ENCODE measurements at regions of chr7 and their contacts with region 1.

Region 1: GRCh38 chr7:876167-876967 is at the start of gene GET4:
- DNase-seq: peak; percentile 98
- ATAC-seq: peak; percentile 78
- H3K4me3 ChIP-seq: peak within 1 kb of the TSS in 4 of 5 experiments; percentile 71 to 97 (median 88)
- H3K4me3 Mint-ChIP-seq: peak within 1 kb of the TSS; percentile 83
- H3K27ac ChIP-seq: peak within 1 kb of the TSS; percentile 80 to 93
- H3K27ac Mint-ChIP-seq: peak within 1 kb of the TSS; percentile 90
- H3K4me1 ChIP-seq: peaks cover 21 to 35% of the 10 kb centered on the region in 2 donors
- H3K4me1 Mint-ChIP-seq: peaks cover 36% of the 10 kb centered on the region
- H3K27me3 ChIP-seq: no peaks in the 10 kb centered on the region
- H3K27me3 Mint-ChIP-seq: no peaks in the 10 kb centered on the region
- CTCF ChIP-seq: no peak
- total RNA-seq, gene GET4: 62.8 and 65.5 TPM in 2 replicates

Region 2: DNA sequence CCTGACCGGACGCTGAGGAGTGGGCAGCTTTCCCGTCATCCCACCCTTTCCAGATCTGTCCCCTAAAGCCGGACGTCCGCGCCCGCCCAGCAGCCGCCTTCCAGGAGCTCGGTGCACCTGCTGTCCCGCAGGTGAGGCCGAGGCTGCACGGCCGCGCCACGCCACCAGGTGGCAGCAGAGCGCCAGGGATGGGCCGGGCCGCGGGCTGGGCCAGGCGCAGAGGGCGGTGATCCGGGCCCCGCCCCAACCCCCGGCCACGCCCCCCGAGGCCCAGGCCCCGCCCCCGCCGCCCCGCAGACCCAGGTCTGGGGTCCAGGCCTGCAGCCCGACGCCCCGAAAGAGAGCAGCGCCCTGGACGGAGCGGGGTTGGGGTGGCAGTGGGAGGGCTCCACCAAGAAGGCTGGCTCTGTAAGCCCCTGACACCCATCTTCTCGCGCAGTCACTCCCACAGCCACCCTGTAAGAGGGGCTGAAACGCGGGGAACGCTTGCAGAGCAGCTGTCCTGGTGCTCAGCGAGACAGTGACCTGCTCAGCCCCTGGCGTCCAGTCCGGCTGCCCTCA is 554.2 kb before region 1 on chr7:
- CTCF ChIA-PET with region 1: interaction called, 3 read pairs
- POLR2A ChIA-PET with region 1: no interaction called
- intact Hi-C with region 1: loop called (anchors 2 kb)
- DNase-seq: peak; percentile 82
- ATAC-seq: peak; percentile 100
- H3K4me3 ChIP-seq: no peak overlapping the region
- H3K4me3 Mint-ChIP-seq: no peak overlapping the region
- H3K27ac ChIP-seq: no peak overlapping the region
- H3K27ac Mint-ChIP-seq: no peak overlapping the region
- H3K4me1 ChIP-seq: peaks cover 0 to 9% of the 10 kb centered on the region in 2 donors
- H3K4me1 Mint-ChIP-seq: peaks cover 2% of the 10 kb centered on the region
- H3K27me3 ChIP-seq: peaks cover 0 to 7% (median 3%) of the 10 kb centered on the region in 4 experiments
- H3K27me3 Mint-ChIP-seq: peaks cover 19% of the 10 kb centered on the region
- CTCF ChIP-seq: peak; percentile 94

Region 3: DNA sequence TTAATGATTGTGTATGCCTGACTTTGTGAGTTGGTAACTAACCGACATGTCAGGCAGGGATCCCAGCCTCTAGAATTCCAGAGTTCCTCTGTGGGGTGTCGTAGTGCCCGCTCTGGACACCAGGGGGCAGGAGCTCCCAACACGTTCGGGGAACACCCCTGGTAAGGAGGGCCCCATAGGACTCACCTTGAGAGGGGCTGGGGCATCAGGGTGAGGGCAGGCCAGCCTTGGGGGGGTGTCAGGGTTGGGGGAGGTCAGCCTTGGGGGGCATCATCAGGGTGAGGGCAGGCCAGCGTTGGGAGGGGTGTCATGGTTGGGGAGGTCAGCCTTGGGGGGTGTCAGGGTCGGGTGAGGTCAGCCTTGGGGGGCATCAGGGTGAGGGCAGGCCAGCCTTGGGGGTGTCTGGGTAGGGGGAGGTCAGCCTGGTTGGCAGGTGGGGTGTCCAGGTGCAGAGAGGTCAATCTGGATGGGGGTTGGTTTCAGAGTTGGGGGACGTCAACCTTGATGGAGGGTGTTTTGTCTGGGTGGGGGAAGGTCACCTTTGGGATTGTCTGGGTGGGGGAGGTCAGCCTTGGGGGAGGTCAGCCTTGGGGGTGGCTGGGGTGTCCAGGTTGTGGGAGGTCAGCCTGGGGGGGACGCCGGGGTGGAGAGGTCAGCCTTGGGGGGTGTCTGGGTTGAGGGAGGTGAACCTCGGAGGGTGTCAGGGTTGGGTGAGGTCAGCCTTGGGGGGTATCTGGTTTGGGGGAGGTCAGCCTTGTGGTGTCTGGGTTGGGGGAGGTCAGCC is 89.7 kb before region 1 on chr7:
- CTCF ChIA-PET with region 1: interaction called, 113 read pairs
- POLR2A ChIA-PET with region 1: no interaction called
- intact Hi-C with region 1: no loop called
- DNase-seq: peak; percentile 70
- ATAC-seq: peak; percentile 85
- H3K4me3 ChIP-seq: no peak overlapping the region
- H3K4me3 Mint-ChIP-seq: no peak overlapping the region
- H3K27ac ChIP-seq: no peak overlapping the region
- H3K27ac Mint-ChIP-seq: no peak overlapping the region
- H3K4me1 ChIP-seq: no peaks in the 10 kb centered on the region
- H3K4me1 Mint-ChIP-seq: no peaks in the 10 kb centered on the region
- H3K27me3 ChIP-seq: no peaks in the 10 kb centered on the region
- H3K27me3 Mint-ChIP-seq: no peaks in the 10 kb centered on the region
- CTCF ChIP-seq: peak; percentile 76

Region 4: GRCh38 chr7:831596-832166 is 44.7 kb before region 1 on chr7:
- CTCF ChIA-PET with region 1: interaction called, 13 read pairs
- POLR2A ChIA-PET with region 1: no interaction called
- intact Hi-C with region 1: loop called (anchors 5 kb)
- DNase-seq: no peak
- ATAC-seq: peak; percentile 67
- H3K4me3 ChIP-seq: peak overlapping the region in 2 of 5 experiments; percentile 14 to 16
- H3K4me3 Mint-ChIP-seq: peak overlapping the region; percentile 85
- H3K27ac ChIP-seq: peak overlapping the region; percentile 76 to 89
- H3K27ac Mint-ChIP-seq: peak overlapping the region; percentile 93
- H3K4me1 ChIP-seq: peaks cover 31 to 32% of the 10 kb centered on the region in 2 donors
- H3K4me1 Mint-ChIP-seq: peaks cover 51% of the 10 kb centered on the region
- H3K27me3 ChIP-seq: no peaks in the 10 kb centered on the region
- H3K27me3 Mint-ChIP-seq: no peaks in the 10 kb centered on the region
- CTCF ChIP-seq: no peak

Region 5: GRCh38 chr7:897771-898376 is 21.5 kb after region 1 on chr7:
- CTCF ChIA-PET with region 1: no interaction called
- POLR2A ChIA-PET with region 1: no interaction called
- intact Hi-C with region 1: no loop called
- DNase-seq: no peak
- ATAC-seq: no peak
- H3K4me3 ChIP-seq: no peak overlapping the region
- H3K4me3 Mint-ChIP-seq: no peak overlapping the region
- H3K27ac ChIP-seq: no peak overlapping the region
- H3K27ac Mint-ChIP-seq: no peak overlapping the region
- H3K4me1 ChIP-seq: peaks cover 0 to 5% of the 10 kb centered on the region in 2 donors
- H3K4me1 Mint-ChIP-seq: no peaks in the 10 kb centered on the region
- H3K27me3 ChIP-seq: no peaks in the 10 kb centered on the region
- H3K27me3 Mint-ChIP-seq: peaks cover 6% of the 10 kb centered on the region
- CTCF ChIP-seq: no peak

Region 6: DNA sequence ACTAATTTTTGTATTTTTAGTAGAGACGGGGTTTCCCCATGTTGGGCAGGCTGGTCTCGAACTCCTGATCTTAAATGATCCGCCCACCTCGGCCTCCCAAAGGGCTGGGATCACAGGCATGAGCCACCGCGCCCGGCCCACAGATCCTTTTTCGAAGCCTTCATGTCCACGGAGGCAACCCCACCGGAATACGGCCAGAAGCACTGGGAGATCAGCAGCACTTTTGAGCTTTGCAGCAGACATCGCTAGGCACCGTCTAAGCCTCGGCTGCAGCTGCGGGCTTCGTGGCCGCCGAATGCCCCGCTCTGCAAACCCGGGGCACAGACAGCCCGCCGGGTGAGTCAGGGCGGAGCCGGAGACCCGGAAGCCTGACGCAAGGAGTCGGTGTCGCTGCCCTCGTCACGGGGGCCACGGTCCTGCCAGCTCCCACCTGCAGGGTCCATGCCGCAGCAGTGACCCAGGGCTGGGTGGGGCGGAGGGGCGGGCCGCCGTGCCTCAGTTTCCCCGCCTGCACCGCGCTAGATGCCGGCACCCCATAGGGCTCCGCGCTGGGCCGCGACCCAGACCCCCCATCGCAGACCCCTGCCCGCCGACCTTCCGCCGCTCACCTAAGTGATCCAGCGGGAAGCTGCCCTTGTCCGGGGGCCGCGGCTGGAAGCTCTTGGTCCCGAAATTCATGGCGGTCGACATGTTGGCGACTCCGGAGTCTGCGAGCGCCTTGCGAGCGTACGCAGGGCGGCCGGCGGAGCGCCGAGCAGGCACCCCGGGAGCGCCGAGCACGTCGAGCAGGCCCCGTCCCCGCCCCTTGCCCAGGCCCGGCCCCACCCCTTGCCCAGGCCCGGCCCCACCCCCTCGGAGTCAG is 98.7 kb after region 1 on chr7 and contains the start of gene COX19:
- CTCF ChIA-PET with region 1: interaction called, 3 read pairs
- POLR2A ChIA-PET with region 1: interaction called, 3 read pairs
- intact Hi-C with region 1: loop called (anchors 1 kb)
- DNase-seq: peak; percentile 91
- ATAC-seq: peak; percentile 86
- H3K4me3 ChIP-seq: peak within 1 kb of the TSS; percentile 66 to 99 (median 91)
- H3K4me3 Mint-ChIP-seq: peak within 1 kb of the TSS; percentile 94
- H3K27ac ChIP-seq: peak within 1 kb of the TSS; percentile 93 to 95
- H3K27ac Mint-ChIP-seq: peak within 1 kb of the TSS; percentile 92
- H3K4me1 ChIP-seq: peaks cover 16 to 22% of the 10 kb centered on the region in 2 donors
- H3K4me1 Mint-ChIP-seq: peaks cover 24% of the 10 kb centered on the region
- H3K27me3 ChIP-seq: peaks cover 0 to 3% (median 0%) of the 10 kb centered on the region in 4 experiments
- H3K27me3 Mint-ChIP-seq: no peaks in the 10 kb centered on the region
- CTCF ChIP-seq: no peak
- total RNA-seq, gene COX19: 38.3 and 44.6 TPM in 2 replicates

Region 7: DNA sequence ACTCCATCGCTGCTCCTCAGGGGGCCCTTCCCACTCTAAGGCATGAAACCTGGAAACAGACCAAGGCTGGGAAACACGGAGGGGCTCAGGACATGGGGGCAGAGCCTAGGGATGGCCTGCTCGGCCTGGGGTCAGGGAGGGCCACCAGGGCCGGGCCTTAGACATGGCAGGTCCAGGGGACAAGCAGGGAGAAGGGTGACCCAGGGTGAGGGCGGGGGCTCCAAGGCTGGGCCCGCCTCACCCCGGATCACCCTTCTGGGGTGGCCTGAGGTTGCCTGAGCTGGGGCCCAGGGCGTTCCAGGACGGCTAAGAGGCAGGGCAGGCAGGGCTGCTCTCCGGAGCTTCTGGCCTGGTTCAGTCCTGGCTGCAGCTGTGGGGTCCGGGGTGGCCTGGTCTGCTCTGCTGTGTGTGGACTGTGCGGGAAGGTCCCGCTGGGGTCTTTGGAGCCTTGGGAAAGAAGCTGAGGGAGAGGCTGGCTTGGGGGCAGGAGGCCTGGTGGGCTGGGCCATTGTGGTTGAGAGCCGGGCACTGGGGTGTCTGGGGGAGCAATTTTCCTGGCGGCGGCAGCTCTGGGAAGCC is 408.5 kb after region 1 on chr7:
- CTCF ChIA-PET with region 1: no interaction called
- POLR2A ChIA-PET with region 1: no interaction called
- intact Hi-C with region 1: no loop called
- DNase-seq: no peak
- ATAC-seq: no peak
- H3K4me3 ChIP-seq: no peak overlapping the region
- H3K4me3 Mint-ChIP-seq: no peak overlapping the region
- H3K27ac ChIP-seq: no peak overlapping the region
- H3K27ac Mint-ChIP-seq: no peak overlapping the region
- H3K4me1 ChIP-seq: no peaks in the 10 kb centered on the region
- H3K4me1 Mint-ChIP-seq: peaks cover 3% of the 10 kb centered on the region
- H3K27me3 ChIP-seq: peaks cover 0 to 4% (median 0%) of the 10 kb centered on the region in 4 experiments
- H3K27me3 Mint-ChIP-seq: peaks cover 3% of the 10 kb centered on the region
- CTCF ChIP-seq: no peak

Measured in B cell (primary cell).